Caco-2 (cell line): ENCODE measurements at regions of chr17 and their contacts with region 1.

Region 1: GRCh38 chr17:40909351-40909750 is 24.3 kb upstream of the KRT20 start:
- DNase-seq: peak; percentile 89
- H3K4me3 ChIP-seq: no peak overlapping the region
- H3K4me3 Mint-ChIP-seq: no peak overlapping the region
- H3K27ac Mint-ChIP-seq: peak overlapping the region; percentile 87
- H3K4me1 ChIP-seq: peaks cover 32% of the 10 kb centered on the region
- H3K4me1 Mint-ChIP-seq: peaks cover 36% of the 10 kb centered on the region
- H3K27me3 ChIP-seq: no peaks in the 10 kb centered on the region
- H3K27me3 Mint-ChIP-seq: no peaks in the 10 kb centered on the region
- CTCF ChIP-seq: peak; percentile 78 to 87

Region 2: DNA sequence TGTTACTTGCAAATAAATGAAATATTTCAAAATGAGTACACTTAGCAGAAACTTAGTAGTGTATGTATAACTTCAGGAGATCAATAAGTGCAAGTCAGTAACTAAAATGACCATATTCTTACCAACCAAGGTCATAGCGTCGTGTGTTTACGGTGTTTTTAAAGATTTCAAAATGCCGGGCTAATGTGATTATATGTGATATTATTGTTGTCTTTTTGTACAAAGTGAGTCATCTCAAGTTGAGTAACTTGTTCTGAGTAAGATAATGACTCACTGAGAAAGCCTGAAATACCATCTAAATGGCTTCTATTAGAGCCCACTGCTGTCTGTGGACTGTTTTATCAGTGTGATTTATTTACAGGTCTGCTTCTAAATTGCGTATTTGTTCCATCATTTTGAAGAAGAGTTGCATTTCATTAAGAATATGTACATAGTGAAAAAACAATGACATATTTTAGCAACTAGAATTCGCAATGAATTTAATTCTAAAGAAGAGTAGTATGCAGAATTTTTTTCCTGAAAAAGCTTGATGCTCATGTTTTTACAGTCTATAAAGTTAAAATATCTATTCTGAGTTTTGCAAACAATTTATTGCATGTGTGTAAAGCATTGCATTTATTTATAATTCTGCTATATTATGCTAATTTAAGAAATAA is 55.1 kb before region 1 on chr17:
- CTCF ChIA-PET with region 1: no interaction called
- POLR2A ChIA-PET with region 1: no interaction called
- intact Hi-C with region 1: loop called (anchors 1 kb)
- DNase-seq: no peak
- H3K4me3 ChIP-seq: no peak overlapping the region
- H3K4me3 Mint-ChIP-seq: no peak overlapping the region
- H3K27ac Mint-ChIP-seq: no peak overlapping the region
- H3K4me1 ChIP-seq: peaks cover 13% of the 10 kb centered on the region
- H3K4me1 Mint-ChIP-seq: peaks cover 19% of the 10 kb centered on the region
- H3K27me3 ChIP-seq: no peaks in the 10 kb centered on the region
- H3K27me3 Mint-ChIP-seq: no peaks in the 10 kb centered on the region
- CTCF ChIP-seq: no peak

Region 3: DNA sequence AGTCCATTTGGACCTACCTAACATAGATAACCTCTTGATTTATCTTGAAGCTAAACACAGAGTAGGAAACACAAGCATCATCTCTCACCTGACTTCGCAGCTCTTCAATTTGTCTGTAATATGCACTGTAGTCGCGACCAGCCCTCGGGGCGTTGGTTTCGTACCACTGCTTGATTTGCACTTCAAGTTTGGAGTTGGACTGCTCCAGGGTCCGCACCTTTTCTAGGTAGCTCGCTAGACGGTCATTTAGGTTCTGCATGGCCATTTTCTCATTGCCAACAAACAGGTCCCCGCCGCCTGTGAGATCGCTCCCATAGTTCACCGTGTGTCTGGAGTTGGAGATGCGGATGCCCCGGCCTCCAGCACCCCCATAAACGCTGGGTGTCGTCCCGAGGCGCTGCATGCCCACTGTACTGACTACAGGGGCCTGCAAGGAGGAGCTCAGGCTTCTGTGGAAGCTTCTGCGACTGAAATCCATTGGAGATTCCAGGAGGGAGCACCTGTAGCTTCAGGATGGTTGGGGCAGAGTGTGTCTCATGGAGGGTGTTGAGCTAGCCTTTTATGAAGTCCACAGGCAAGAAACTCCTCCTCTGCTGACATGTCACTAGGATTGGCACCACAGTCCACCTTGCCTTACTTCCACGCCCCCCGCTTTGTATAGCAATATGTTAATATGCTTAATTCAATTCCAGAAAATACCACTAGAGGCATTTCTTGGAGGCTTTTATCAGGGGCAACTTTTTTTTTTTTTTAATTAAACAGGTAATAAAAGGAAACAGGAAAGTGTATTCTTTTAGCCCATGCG is 24.4 kb before region 1 on chr17 and contains the start of gene KRT20:
- CTCF ChIA-PET with region 1: no interaction called
- POLR2A ChIA-PET with region 1: no interaction called
- intact Hi-C with region 1: no loop called
- DNase-seq: no peak
- H3K4me3 ChIP-seq: no peak within 1 kb of the TSS
- H3K4me3 Mint-ChIP-seq: no peak within 1 kb of the TSS
- H3K27ac Mint-ChIP-seq: no peak within 1 kb of the TSS
- H3K4me1 ChIP-seq: peaks cover 9% of the 10 kb centered on the region; the same call in 1 of the 2 replicates
- H3K4me1 Mint-ChIP-seq: peaks cover 12% of the 10 kb centered on the region
- H3K27me3 ChIP-seq: no peaks in the 10 kb centered on the region
- H3K27me3 Mint-ChIP-seq: no peaks in the 10 kb centered on the region
- CTCF ChIP-seq: peak in 1 of 2 experiments; percentile 32
- total RNA-seq, gene KRT20: 0.53 and 1.0 TPM in 2 replicates

Region 4: DNA sequence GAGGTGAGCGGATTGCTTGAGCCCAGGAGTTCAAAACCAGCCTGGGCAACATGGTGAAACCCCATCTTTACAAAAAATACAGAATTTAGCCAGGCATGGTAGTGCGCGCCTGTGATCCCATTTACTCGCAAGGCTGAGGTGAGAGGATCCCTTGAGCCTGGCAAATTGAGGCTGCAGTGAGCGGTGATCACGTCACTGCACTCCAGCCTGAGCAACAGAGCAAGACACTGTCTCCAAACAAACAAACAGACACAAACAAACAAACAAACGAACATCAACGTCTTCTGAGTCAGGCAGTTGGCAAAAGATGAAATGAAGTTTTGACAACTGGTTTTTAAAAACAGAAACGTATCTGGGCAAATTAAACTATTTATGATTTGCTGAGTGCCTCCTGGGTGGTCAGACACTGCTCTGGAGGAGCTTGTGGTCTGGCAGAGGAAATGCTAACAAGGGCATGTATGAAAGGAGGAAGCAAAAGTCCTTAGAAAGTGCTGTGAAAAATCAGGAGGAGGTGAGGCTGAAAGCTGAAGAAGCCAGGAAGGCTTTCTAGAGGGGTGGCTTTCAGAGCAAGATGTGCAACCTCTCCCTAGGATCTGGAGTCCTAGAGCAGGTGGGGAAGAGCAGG is 14.1 kb before region 1 on chr17:
- CTCF ChIA-PET with region 1: no interaction called
- POLR2A ChIA-PET with region 1: no interaction called
- intact Hi-C with region 1: no loop called
- DNase-seq: no peak
- H3K4me3 ChIP-seq: no peak overlapping the region
- H3K4me3 Mint-ChIP-seq: no peak overlapping the region
- H3K27ac Mint-ChIP-seq: peak overlapping the region; percentile 31
- H3K4me1 ChIP-seq: peaks cover 6% of the 10 kb centered on the region
- H3K4me1 Mint-ChIP-seq: no peaks in the 10 kb centered on the region
- H3K27me3 ChIP-seq: no peaks in the 10 kb centered on the region
- H3K27me3 Mint-ChIP-seq: no peaks in the 10 kb centered on the region
- CTCF ChIP-seq: no peak

Region 5: DNA sequence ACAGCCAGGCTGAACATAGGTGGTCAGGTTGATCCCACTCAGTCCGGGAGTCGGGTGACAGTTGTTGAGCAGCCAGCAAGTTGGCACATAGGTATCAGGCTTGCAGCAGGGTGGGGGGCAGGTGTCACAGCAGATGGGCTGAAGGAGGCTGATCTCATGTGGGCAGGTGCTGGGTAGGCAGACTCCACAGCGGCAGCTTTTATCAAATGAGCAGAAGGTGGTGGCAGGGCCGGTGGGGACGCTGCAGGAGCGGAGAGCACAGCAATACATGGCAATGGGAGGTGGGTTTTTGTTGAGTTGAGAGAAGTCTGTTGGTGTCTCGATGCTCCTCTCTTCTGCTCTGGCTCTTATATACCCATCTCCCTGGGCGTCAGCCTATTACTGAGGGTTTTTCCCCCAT is 99.5 kb after region 1 on chr17 and contains the start of gene KRTAP3-1:
- CTCF ChIA-PET with region 1: no interaction called
- POLR2A ChIA-PET with region 1: no interaction called
- intact Hi-C with region 1: loop called (anchors 1 kb)
- DNase-seq: peak; percentile 57 to 66
- H3K4me3 ChIP-seq: no peak within 1 kb of the TSS
- H3K4me3 Mint-ChIP-seq: peak within 1 kb of the TSS; percentile 42
- H3K27ac Mint-ChIP-seq: peak within 1 kb of the TSS; percentile 94
- H3K4me1 ChIP-seq: peaks cover 50% of the 10 kb centered on the region
- H3K4me1 Mint-ChIP-seq: peaks cover 53% of the 10 kb centered on the region
- H3K27me3 ChIP-seq: no peaks in the 10 kb centered on the region
- H3K27me3 Mint-ChIP-seq: no peaks in the 10 kb centered on the region
- CTCF ChIP-seq: no peak
- total RNA-seq, gene KRTAP3-1: 7.4 and 7.9 TPM in 2 replicates

Region 6: DNA sequence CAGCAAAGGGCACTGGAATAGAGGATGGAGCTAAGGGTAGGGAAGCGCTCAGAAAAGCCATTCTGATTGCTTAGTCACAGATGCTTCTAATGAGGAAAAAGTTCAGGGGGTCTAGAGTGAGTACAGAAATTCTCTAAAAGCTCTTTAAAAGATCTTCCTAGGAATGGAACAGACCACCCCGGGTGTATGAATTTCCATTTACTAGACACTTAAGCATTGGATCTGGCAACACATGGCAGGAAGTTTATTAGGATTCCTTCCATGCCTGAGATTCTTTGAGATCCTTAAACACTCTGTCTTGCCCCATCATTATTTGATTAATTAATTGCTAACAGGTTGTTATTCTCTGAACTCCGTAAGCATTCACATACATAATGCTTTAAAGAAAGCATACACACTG is 374.7 kb after region 1 on chr17:
- CTCF ChIA-PET with region 1: no interaction called
- POLR2A ChIA-PET with region 1: no interaction called
- intact Hi-C with region 1: loop called (anchors 1 kb)
- DNase-seq: peak in 1 of 2 experiments; percentile 22
- H3K4me3 ChIP-seq: no peak overlapping the region
- H3K4me3 Mint-ChIP-seq: no peak overlapping the region
- H3K27ac Mint-ChIP-seq: no peak overlapping the region
- H3K4me1 ChIP-seq: peaks cover 31% of the 10 kb centered on the region
- H3K4me1 Mint-ChIP-seq: peaks cover 34% of the 10 kb centered on the region
- H3K27me3 ChIP-seq: no peaks in the 10 kb centered on the region
- H3K27me3 Mint-ChIP-seq: no peaks in the 10 kb centered on the region
- CTCF ChIP-seq: no peak

Region 7: DNA sequence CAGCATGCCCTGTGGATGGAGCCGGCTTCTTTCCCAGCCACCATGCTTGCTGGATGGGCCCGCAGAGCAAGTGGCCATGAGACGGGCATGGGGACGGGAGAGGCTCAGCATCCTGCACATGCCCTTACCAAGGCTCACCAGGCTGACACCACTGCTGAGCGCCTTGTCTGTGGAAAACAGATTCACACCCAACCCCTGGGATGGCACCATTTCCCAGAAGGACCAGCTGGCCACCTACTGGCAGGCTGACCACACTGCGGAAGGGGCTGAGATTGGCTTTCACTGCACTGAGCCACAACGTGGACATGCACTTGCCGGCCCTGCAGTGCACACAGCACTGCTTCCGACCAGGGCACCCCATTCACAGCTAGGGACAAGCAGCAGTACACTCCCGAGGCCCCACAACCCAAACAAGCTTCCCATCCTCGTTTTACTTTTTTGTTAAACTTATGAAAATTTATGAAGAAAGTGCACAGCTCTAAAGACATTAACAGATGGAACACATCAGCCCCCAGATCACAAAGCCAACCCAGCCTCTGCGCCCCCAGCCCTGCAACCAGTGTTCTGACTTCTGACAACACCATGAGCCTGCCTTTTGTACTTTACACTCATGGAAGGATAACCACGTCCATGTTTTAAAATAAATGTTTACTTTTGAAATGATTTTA is 420.1 kb after region 1 on chr17:
- CTCF ChIA-PET with region 1: no interaction called
- POLR2A ChIA-PET with region 1: no interaction called
- intact Hi-C with region 1: loop called (anchors 1 kb)
- DNase-seq: peak; percentile 74 to 81
- H3K4me3 ChIP-seq: no peak overlapping the region
- H3K4me3 Mint-ChIP-seq: no peak overlapping the region
- H3K27ac Mint-ChIP-seq: no peak overlapping the region
- H3K4me1 ChIP-seq: no peaks in the 10 kb centered on the region
- H3K4me1 Mint-ChIP-seq: no peaks in the 10 kb centered on the region
- H3K27me3 ChIP-seq: no peaks in the 10 kb centered on the region
- H3K27me3 Mint-ChIP-seq: no peaks in the 10 kb centered on the region
- CTCF ChIP-seq: peak; percentile 85 to 91